Heart left ventricle (tissue), 16 donors: ENCODE measurements at regions of chr16 and their contacts with region 1.

Region 1: GRCh38 chr16:77043076-77043475 is 147.9 kb upstream of the MON1B start:
- DNase-seq: no peak
- ATAC-seq: no peak
- H3K4me3 ChIP-seq: no peak overlapping the region
- H3K27ac ChIP-seq: no peak overlapping the region
- H3K4me1 ChIP-seq: no peaks in the 10 kb centered on the region
- H3K27me3 ChIP-seq: no peaks in the 10 kb centered on the region
- CTCF ChIP-seq: peak in 5 of 12 donors; percentile 19 to 38 (median 33)
- POLR2A ChIP-seq: no peak

Region 2: GRCh38 chr16:75789237-75789636 is 1253.8 kb before region 1 on chr16:
- intact Hi-C with region 1: loop called in 1 of 10 experiments (anchors 10 kb)
- DNase-seq: no peak
- ATAC-seq: peak in 2 of 4 donors; percentile 39 to 47
- H3K4me3 ChIP-seq: no peak overlapping the region
- H3K27ac ChIP-seq: no peak overlapping the region
- H3K4me1 ChIP-seq: no peaks in the 10 kb centered on the region
- H3K27me3 ChIP-seq: peaks cover 0 to 19% (median 5%) of the 10 kb centered on the region in 9 donors
- CTCF ChIP-seq: peak; percentile 70 to 89 (median 83)
- POLR2A ChIP-seq: no peak

Region 3: DNA sequence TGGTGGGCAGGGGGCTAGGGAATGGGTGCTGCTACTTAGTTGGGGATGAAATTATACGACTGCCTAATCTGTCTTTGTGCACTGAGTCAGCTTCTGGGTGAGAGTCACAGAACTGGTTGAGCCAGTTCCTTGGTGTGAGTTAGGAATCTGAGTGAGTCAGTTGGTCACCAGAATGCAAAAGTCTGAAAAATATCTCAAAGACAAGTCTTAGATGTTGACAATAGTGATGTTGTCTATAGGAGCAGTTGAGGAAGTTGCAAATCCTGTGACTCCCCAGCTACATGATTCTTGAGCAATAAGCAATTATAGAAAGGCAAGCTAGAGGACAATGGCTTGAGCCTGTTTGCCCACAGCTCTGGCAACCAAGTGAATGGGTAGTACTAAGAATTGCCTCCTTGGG is 366.7 kb before region 1 on chr16:
- intact Hi-C with region 1: loop called in 1 of 10 experiments (anchors 10 kb)
- DNase-seq: no peak
- ATAC-seq: no peak
- H3K4me3 ChIP-seq: no peak overlapping the region
- H3K27ac ChIP-seq: no peak overlapping the region
- H3K4me1 ChIP-seq: no peaks in the 10 kb centered on the region
- H3K27me3 ChIP-seq: no peaks in the 10 kb centered on the region
- CTCF ChIP-seq: no peak
- POLR2A ChIP-seq: no peak

Region 4: GRCh38 chr16:76862901-76863300 is 180.2 kb before region 1 on chr16:
- intact Hi-C with region 1: no loop called
- DNase-seq: no peak
- ATAC-seq: no peak
- H3K4me3 ChIP-seq: no peak overlapping the region
- H3K27ac ChIP-seq: no peak overlapping the region
- H3K4me1 ChIP-seq: no peaks in the 10 kb centered on the region
- H3K27me3 ChIP-seq: no peaks in the 10 kb centered on the region
- CTCF ChIP-seq: no peak
- POLR2A ChIP-seq: no peak

Region 5: DNA sequence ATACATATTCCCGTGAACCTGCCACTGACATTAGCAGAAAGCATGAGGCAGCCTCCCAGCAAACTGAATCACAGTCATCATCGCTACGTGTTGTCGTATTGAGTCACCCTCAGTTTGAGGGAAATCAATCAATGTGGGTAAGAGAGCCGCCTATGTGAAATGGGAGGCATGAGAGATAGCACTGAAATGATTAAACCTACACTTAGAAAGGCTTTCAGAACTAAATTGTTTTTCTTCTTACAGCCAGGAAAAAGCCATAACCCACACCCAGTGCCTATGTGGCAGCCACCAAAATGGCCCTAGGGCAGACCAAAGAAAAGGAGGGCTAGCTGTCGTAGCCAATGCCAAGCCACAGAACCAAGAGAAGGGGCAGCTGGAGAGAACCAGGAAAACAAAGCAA is 301.3 kb after region 1 on chr16:
- intact Hi-C with region 1: no loop called
- DNase-seq: no peak
- ATAC-seq: no peak
- H3K4me3 ChIP-seq: no peak overlapping the region
- H3K27ac ChIP-seq: no peak overlapping the region
- H3K4me1 ChIP-seq: no peaks in the 10 kb centered on the region
- H3K27me3 ChIP-seq: no peaks in the 10 kb centered on the region
- CTCF ChIP-seq: no peak
- POLR2A ChIP-seq: no peak